Gastrocnemius medialis (tissue), 4 donors: ENCODE measurements at regions of chr3 and their contacts with region 1.

Region 1: DNA sequence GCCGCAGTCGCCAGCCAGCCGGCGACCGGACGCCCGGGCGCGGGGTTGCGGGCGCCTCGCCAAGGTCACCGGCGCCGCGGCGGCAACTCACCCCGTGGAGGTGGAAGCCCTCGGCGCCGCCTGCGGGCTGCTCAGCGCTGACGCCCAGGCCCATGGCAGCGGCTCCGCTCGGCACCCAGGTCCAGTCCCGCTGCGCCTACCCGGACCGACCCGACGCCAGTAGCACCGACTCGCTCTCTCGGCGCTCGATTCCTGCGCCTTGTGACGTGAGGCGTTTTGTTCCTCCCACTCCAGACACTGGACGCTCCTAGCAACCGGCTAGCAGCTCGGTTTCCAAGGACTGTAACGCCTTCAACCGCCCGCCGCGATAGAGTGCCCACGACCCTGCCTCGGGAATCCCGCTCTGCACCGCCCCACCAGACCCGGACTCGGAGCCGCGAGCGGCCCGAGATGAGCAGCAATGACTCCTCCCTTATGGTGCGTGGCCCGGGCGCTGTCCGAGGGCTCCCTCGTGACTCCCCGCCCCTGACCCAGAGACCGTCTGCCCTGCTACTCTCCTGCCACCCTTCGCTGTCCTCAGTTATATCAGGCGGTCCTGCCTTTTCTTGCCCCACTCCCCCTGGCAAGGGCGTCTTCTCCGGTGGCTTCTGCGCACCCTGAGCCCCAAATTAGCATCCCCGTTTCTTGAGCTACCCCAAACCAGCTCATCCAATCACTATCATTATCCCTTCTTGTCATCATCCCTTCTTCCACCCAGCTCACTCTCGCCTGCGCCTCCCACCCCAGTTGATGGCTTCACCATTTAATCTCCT is at the starts of genes GORASP1 and TTC21A:
- DNase-seq: peak; percentile 87 to 88
- ATAC-seq: peak; percentile 95
- H3K4me3 ChIP-seq: peak within 1 kb of the TSS; percentile 71 to 95 (median 84)
- H3K27ac ChIP-seq: peak within 1 kb of the TSS; percentile 89 to 99 (median 94)
- H3K4me1 ChIP-seq: peaks cover 37 to 40% of the 10 kb centered on the region in 2 donors
- H3K27me3 ChIP-seq: no peaks in the 10 kb centered on the region
- CTCF ChIP-seq: peak in 1 of 5 experiments; percentile 27
- POLR2A ChIP-seq: peak; percentile 86 to 89
- total RNA-seq, gene GORASP1: 34.3 to 81.9 (median 38.5) TPM
- total RNA-seq, gene TTC21A: 0.33 to 4.3 (median 1.1) TPM

Region 2: DNA sequence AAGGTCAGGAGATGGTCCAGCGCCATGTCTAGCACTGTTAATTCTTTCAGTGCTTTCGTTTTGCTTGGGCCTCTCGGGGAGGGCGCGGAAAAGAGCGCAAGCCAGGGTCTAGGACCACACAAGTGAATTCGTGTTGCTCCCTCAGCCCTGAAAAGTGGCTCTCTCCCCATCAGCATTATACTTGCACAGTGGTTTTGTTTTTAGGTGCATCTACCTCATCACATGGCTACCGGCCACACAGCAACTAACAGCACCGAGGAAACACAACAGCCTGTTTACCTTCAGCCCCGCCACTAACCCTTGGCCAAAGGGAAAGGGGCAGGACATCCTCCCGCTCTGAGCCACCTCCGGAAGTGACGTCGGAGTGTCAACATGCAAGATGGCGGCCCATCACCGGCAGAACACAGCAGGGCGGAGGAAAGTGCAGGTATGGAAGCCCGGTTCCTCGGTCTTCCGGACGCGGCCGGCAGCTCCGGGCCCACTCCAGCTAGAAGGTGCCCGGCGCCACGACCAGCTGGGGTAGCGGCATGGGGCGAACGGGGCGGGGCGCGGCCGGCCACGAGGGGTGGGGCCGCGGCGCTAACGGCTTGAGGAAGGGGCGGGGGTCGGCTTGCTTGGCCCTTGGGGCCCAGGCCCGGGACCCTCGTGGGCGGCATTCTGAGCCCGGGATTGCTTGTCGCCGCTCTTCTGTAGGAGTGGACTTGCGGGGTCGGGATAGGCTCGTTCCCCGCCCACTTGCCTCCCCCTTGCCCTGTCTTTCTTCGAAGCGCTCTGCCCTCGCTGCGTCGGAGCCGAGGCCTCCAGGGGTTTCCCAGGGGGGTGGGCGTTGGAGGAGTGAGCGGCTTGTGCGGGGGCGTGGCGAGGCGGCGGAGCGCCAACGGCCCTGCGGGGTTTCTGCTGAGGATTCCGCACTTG is 55.7 kb before region 1 on chr3 and contains the starts of genes SCN11A and WDR48:
- in situ Hi-C with region 1: no loop called
- intact Hi-C with region 1: loop called (anchors 2 kb)
- DNase-seq: peak; percentile 92
- ATAC-seq: peak; percentile 99 to 100
- H3K4me3 ChIP-seq: peak within 1 kb of the TSS; percentile 94 to 98 (median 94)
- H3K27ac ChIP-seq: peak within 1 kb of the TSS; percentile 84 to 96 (median 94)
- H3K4me1 ChIP-seq: peaks cover 22% of the 10 kb centered on the region in 2 donors
- H3K27me3 ChIP-seq: no peaks in the 10 kb centered on the region
- CTCF ChIP-seq: no peak
- POLR2A ChIP-seq: peak; percentile 64 to 77
- total RNA-seq, gene SCN11A: 0.04 TPM in 1 of 4 donors, not detected in the others
- total RNA-seq, gene WDR48: 14.8 to 26.5 (median 19.8) TPM

Region 3: GRCh38 chr3:39226106-39226741 is 118.6 kb after region 1 on chr3:
- in situ Hi-C with region 1: no loop called
- intact Hi-C with region 1: no loop called
- DNase-seq: no peak
- ATAC-seq: no peak
- H3K4me3 ChIP-seq: no peak overlapping the region
- H3K27ac ChIP-seq: no peak overlapping the region
- H3K4me1 ChIP-seq: no peaks in the 10 kb centered on the region
- H3K27me3 ChIP-seq: no peaks in the 10 kb centered on the region
- CTCF ChIP-seq: no peak
- POLR2A ChIP-seq: no peak